ENCODE measurements at regions of chr2 and their contacts with region 1.

Region 1: DNA sequence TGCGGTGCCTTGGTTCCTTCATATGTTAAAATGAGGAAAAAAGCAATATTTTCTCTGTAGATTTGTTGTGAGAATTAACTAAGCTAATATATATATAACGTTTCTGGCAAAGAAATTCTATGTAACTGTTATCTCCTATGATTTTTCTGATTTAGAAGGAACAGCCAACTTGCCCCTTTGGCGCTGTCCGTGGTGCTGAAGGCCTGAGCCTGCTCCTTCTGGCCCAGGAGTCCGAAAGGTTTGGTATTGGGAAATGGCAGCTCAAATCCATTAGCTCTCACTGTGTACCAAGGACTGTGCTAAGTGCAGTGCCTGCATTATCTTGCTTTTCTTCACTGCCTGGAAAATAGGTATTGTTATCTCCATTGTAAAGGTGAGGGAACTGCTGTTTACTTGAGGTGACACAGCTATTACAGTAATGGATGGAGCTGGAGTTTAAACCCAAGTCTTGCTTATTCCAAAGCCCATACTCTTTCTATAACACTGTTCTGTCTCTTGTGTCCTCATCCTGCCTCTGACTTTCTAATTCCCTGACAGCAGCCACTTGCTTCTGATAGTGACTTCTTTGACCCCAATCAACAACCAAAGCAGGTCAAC is 52.2 kb downstream of the C1QL2 start:
- DNase-seq: peak in 1 of 2 experiments; percentile 88
- H3K4me3 ChIP-seq: no peak overlapping the region
- H3K27ac ChIP-seq: no peak overlapping the region
- H3K4me1 ChIP-seq: peaks cover 3 to 14% (median 8%) of the 10 kb centered on the region in 4 experiments; a peak in 6 of 7 replicates
- H3K27me3 ChIP-seq: no peaks in the 10 kb centered on the region; a peak in 1 of 7 replicates
- CTCF ChIP-seq: no peak
- EP300 ChIP-seq: no peak
- POLR2A ChIP-seq: no peak
- RAD21 ChIP-seq: no peak

Region 2: DNA sequence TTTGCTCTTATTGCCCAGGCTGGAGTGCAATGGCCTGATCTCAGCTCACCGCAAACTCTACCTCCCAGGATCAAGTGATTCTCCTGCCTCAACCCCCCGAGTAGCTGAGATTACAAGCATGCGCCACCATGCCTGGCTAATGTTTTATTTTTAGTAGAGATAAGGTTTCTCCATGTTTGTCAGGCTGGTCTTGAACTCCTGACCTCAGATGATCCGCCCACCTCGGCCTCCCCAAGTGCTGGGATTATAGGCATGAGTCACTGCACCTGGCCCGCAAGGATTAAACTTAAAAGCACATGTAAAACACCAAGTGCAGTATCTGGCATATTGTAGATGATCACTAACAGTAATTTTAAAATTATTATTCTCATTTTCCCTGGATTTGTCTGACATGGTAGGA is 20.8 kb before region 1 on chr2:
- CTCF ChIA-PET with region 1: interaction called, 12 read pairs
- POLR2A ChIA-PET with region 1: no interaction called
- DNase-seq: no peak
- H3K4me3 ChIP-seq: no peak overlapping the region
- H3K27ac ChIP-seq: no peak overlapping the region
- H3K4me1 ChIP-seq: peaks cover 0 to 3% (median 0%) of the 10 kb centered on the region in 4 experiments; a peak in 1 of 7 replicates
- H3K27me3 ChIP-seq: no peaks in the 10 kb centered on the region
- CTCF ChIP-seq: no peak
- EP300 ChIP-seq: no peak
- POLR2A ChIP-seq: no peak
- RAD21 ChIP-seq: no peak

Region 3: GRCh38 chr2:119119076-119119877 is 12.9 kb after region 1 on chr2:
- CTCF ChIA-PET with region 1: interaction called, 26 read pairs
- POLR2A ChIA-PET with region 1: interaction called, 4 read pairs
- DNase-seq: peak in 1 of 2 experiments; percentile 40
- H3K4me3 ChIP-seq: no peak overlapping the region
- H3K27ac ChIP-seq: no peak overlapping the region
- H3K4me1 ChIP-seq: peaks cover 10 to 26% (median 16%) of the 10 kb centered on the region in 4 experiments
- H3K27me3 ChIP-seq: peaks cover 0 to 4% (median 0%) of the 10 kb centered on the region in 4 experiments; a peak in 3 of 7 replicates
- CTCF ChIP-seq: no peak
- EP300 ChIP-seq: no peak
- POLR2A ChIP-seq: no peak
- RAD21 ChIP-seq: no peak

Region 4: GRCh38 chr2:119126650-119127049 is 20.3 kb after region 1 on chr2:
- CTCF ChIA-PET with region 1: interaction called, 14 read pairs
- POLR2A ChIA-PET with region 1: interaction called, 4 read pairs
- DNase-seq: peak; percentile 84 to 90
- H3K4me3 ChIP-seq: peak overlapping the region in 1 of 4 experiments; percentile 16; a peak in 1 of 8 replicates
- H3K27ac ChIP-seq: no peak overlapping the region
- H3K4me1 ChIP-seq: peaks cover 0 to 16% (median 8%) of the 10 kb centered on the region in 4 experiments; a peak in 4 of 7 replicates
- H3K27me3 ChIP-seq: peaks cover 0 to 9% (median 0%) of the 10 kb centered on the region in 4 experiments; a peak in 2 of 7 replicates
- CTCF ChIP-seq: peak; percentile 69 to 83 (median 77)
- EP300 ChIP-seq: no peak
- POLR2A ChIP-seq: no peak
- RAD21 ChIP-seq: peak; percentile 49 to 66